Activated B cell treated with CpG ODN at 0.5 μM for 24 hours (primary cell): ENCODE measurements at regions of chr7 and their contacts with region 1.

Region 1: DNA sequence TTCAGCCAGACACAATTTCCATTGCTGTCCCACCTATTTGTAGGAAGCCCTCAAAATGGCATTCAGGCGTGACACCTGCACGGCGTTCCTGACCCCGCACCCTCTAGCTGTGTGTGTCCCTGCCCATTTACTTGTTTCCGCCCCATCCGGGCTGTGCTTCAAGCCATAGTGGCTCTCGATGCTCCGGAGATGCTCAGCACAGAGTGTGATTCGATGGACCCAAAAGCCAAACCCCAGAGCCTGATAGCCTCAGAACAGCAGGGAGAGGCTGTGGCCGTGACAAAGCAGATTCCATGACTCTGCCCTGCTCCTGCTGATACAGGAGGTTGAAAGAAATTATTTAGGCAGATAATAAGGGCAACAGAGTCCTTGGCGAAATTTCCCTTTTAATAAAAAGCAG is 13.4 kb downstream of the BUD31 start:
- DNase-seq: no peak
- ATAC-seq: no peak
- H3K4me3 Mint-ChIP-seq: no peak overlapping the region
- H3K27ac Mint-ChIP-seq: no peak overlapping the region
- H3K4me1 Mint-ChIP-seq: no peaks in the 10 kb centered on the region
- H3K27me3 Mint-ChIP-seq: no peaks in the 10 kb centered on the region
- CTCF ChIP-seq: no peak

Region 2: DNA sequence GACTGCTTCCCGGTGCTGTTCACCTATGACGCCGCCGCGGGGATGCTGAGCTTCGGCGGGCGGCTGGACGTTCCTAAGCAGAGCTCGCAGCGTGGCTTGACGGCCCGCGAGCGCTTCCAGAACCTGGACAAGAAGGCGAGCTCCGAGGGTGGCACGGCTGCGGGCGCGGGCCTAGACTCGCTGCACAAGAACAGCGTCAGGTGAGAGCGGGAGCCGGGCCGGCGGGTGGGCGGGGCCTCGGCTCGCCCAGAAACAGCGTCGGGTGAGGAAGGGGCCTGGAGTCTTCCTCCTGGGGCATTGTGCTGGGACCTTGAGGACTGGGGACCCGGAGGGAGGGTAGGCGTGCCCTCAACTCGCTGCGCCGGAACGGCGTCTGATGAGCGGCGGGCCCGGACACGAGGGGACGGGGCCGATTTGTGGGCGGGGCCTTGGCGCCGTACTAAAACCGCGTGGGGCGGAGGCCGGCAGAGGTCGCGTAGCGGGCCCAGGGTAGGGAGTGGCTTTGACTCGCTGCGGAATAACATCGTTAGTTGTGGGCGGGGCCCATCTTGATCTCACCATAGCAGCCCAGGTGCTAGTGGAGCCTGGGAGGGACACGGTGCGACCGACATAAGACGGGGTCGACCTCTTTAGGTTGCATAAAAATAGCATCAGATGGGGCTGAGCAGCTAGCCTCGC is 29.4 kb before region 1 on chr7:
- CTCF ChIA-PET with region 1: no interaction called
- POLR2A ChIA-PET with region 1: no interaction called
- intact Hi-C with region 1: no loop called
- DNase-seq: peak; percentile 79
- ATAC-seq: peak; percentile 92
- H3K4me3 Mint-ChIP-seq: peak overlapping the region; percentile 84
- H3K27ac Mint-ChIP-seq: peak overlapping the region; percentile 78
- H3K4me1 Mint-ChIP-seq: peaks cover 28% of the 10 kb centered on the region
- H3K27me3 Mint-ChIP-seq: no peaks in the 10 kb centered on the region
- CTCF ChIP-seq: no peak

Region 3: DNA sequence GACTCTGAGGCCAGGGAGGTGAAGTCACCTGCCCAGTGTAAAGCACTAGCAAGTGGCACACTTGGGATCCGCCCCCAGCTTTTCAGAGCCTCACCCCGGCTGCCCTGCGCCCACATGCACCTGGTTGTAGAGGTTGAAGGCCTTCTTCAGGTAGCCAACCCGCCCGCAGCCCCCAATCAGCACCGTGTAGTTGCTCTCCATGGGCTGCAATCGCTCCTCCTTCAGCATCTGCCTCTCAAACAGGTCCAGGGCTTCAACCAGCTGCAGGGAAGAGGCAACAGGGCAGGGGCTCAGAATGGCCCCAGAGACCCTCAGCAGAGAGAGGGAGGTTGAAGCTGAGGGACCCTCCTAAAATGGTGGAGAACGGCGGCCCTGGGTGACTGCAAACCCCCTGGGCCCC is 11.0 kb after region 1 on chr7:
- CTCF ChIA-PET with region 1: no interaction called
- POLR2A ChIA-PET with region 1: interaction called, 10 read pairs
- intact Hi-C with region 1: no loop called
- DNase-seq: no peak
- ATAC-seq: no peak
- H3K4me3 Mint-ChIP-seq: no peak overlapping the region
- H3K27ac Mint-ChIP-seq: no peak overlapping the region
- H3K4me1 Mint-ChIP-seq: peaks cover 2% of the 10 kb centered on the region
- H3K27me3 Mint-ChIP-seq: no peaks in the 10 kb centered on the region
- CTCF ChIP-seq: no peak